Common myeloid progenitor, CD34-positive (primary cell): ENCODE measurements at regions of chr15 and their contacts with region 1.

Region 1: GRCh38 chr15:90642464-90643300 is 74.5 kb upstream of the BLM start:
- DNase-seq: no peak
- H3K4me3 ChIP-seq: no peak overlapping the region
- H3K27ac ChIP-seq: no peak overlapping the region
- H3K4me1 ChIP-seq: peaks cover 1 to 10% (median 5%) of the 10 kb centered on the region in 4 experiments
- H3K27me3 ChIP-seq: no peaks in the 10 kb centered on the region

Region 2: GRCh38 chr15:90610190-90610589 is 32.5 kb before region 1 on chr15:
- CTCF ChIA-PET with region 1: no interaction called
- POLR2A ChIA-PET with region 1: no interaction called
- DNase-seq: no peak
- H3K4me3 ChIP-seq: no peak overlapping the region
- H3K27ac ChIP-seq: no peak overlapping the region
- H3K4me1 ChIP-seq: peaks cover 0 to 11% (median 5%) of the 10 kb centered on the region in 4 experiments
- H3K27me3 ChIP-seq: no peaks in the 10 kb centered on the region

Region 3: GRCh38 chr15:90654233-90655124 is 11.8 kb after region 1 on chr15:
- CTCF ChIA-PET with region 1: interaction called, 11 read pairs
- POLR2A ChIA-PET with region 1: interaction called, 3 read pairs
- DNase-seq: peak in 1 of 3 donors; percentile 57
- H3K4me3 ChIP-seq: no peak overlapping the region
- H3K27ac ChIP-seq: no peak overlapping the region
- H3K4me1 ChIP-seq: peaks cover 28 to 67% (median 56%) of the 10 kb centered on the region in 4 experiments
- H3K27me3 ChIP-seq: no peaks in the 10 kb centered on the region